ENCODE measurements at regions of chr20 and their contacts with region 1.

Region 1: GRCh38 chr20:3820048-3820900 is at the start of gene AP5S1:
- DNase-seq: peak; percentile 98 to 99
- ATAC-seq: peak; percentile 96
- H3K4me3 ChIP-seq: peak within 1 kb of the TSS; percentile 62 to 70
- H3K27ac ChIP-seq: peak within 1 kb of the TSS; percentile 69 to 95
- H3K4me1 ChIP-seq: no peaks in the 10 kb centered on the region
- H3K27me3 ChIP-seq: no peaks in the 10 kb centered on the region
- total RNA-seq, gene AP5S1: 9.9 to 12.3 TPM

Region 2: DNA sequence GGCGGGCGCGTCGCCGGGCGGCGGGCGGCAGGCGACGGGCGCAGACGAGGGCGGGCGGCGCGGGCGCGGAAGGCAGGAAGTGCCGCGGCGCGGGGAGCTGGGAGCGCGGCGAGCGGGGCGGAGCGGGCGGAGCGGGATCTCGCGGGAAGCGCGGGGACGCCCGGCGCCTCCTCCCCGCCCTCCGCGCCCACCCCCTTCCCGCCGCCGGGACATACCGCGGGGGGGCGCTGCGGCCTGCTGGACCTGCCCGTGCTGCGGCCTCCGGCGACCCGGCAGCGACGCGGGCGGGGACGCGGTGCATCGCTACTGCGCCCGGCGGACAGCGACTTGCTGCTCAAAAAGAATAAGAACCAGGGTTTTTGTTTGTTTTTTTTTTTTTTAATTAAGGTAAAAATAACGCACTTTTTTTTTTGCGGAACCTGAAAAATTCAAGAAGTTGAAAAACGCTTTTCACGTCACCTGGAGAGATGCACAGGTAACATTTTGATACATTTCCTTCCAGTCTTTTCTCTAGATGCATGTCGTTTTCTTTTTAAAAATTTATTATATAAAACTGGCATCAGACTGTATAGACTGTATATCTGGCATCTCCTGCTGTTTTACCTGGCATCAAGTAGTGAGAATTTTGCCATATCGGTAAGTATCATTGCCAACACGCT is 33.5 kb before region 1 on chr20 and contains the start of gene CENPB:
- intact Hi-C with region 1: loop called (anchors 1 to 2 kb)
- DNase-seq: peak; percentile 93 to 97
- ATAC-seq: peak; percentile 96
- H3K4me3 ChIP-seq: peak within 1 kb of the TSS; percentile 80 to 98
- H3K27ac ChIP-seq: peak within 1 kb of the TSS; percentile 24 to 65
- H3K4me1 ChIP-seq: no peaks in the 10 kb centered on the region
- H3K27me3 ChIP-seq: no peaks in the 10 kb centered on the region
- total RNA-seq, gene CENPB: 79.7 to 89.4 TPM

Region 3: DNA sequence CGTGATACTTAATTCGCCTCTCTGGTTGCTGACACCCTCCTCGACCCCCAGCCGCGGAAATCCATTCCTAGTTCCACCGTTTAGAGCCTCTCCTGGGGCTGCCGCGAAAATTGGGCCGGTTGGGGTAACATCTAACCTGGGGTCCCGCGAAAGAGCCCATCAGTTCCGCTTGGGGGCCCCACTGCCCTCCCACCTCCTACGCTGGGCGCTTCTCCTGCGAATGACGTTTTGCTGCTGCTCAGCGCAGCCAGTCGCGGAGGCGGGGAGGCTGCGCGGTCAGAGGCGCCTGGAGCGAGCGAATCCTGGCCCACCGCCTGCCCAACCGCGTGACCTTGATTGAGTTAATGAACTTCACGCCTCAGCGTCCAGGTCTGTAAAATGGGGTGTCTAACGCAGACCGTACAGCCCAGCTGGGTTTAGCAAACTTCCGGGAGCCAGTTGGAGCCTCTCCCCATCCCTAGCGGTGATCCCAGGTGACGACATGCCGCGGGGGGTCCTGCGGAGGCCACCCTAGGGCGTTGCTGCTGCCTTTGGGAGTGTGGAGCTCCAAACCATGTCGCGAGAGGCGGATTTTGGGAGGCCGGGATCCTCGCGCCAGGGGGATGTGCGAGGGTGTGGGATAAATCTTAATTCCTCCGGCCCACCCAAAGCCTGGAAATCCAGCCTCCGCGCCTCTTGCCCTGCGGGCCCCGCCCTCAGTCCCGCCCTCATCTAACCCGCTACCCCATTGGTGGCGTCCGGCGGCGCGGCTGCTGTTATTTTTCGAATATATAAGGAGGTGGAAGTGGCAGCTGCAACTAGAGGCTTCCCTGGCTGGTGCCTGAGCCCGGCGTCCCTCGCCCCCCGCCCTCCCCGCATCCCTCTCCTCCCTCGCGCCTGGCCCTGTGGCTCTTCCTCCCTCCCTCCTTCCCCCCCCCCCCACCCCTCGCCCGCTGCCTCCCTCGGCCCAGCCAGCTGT is 24.5 kb before region 1 on chr20 and contains the start of gene CDC25B:
- intact Hi-C with region 1: loop called in 1 of 2 experiments (anchors 2 kb)
- DNase-seq: peak; percentile 98
- ATAC-seq: peak; percentile 96
- H3K4me3 ChIP-seq: peak within 1 kb of the TSS; percentile 57 to 80
- H3K27ac ChIP-seq: peak within 1 kb of the TSS; percentile 92 to 96
- H3K4me1 ChIP-seq: no peaks in the 10 kb centered on the region
- H3K27me3 ChIP-seq: no peaks in the 10 kb centered on the region
- total RNA-seq, gene CDC25B: 29.6 to 56.3 TPM

Region 4: GRCh38 chr20:3846740-3847428 is 26.6 kb after region 1 on chr20 and contains the start of gene MAVS:
- intact Hi-C with region 1: no loop called
- DNase-seq: peak; percentile 92 to 96
- ATAC-seq: peak; percentile 97
- H3K4me3 ChIP-seq: peak within 1 kb of the TSS; percentile 22 to 92
- H3K27ac ChIP-seq: peak within 1 kb of the TSS; percentile 71 to 77
- H3K4me1 ChIP-seq: no peaks in the 10 kb centered on the region
- H3K27me3 ChIP-seq: no peaks in the 10 kb centered on the region
- total RNA-seq, gene MAVS: 33.4 to 36.1 TPM

Region 5: GRCh38 chr20:3901028-3901705 is 80.9 kb after region 1 on chr20:
- intact Hi-C with region 1: no loop called
- DNase-seq: no peak
- ATAC-seq: no peak
- H3K4me3 ChIP-seq: no peak overlapping the region
- H3K27ac ChIP-seq: no peak overlapping the region
- H3K4me1 ChIP-seq: peaks cover 5 to 13% of the 10 kb centered on the region in 2 donors
- H3K27me3 ChIP-seq: no peaks in the 10 kb centered on the region

Measured in aorta (tissue), 5 donors.